MCF 10A (cell line): ENCODE measurements at regions of chrX and their contacts with region 1.

Region 1: GRCh38 chrX:88135735-88136134 is 611.3 kb upstream of the CPXCR1 start:
- DNase-seq: peak; percentile 13
- H3K4me3 Mint-ChIP-seq: no peak overlapping the region
- H3K27ac Mint-ChIP-seq: no peak overlapping the region
- H3K4me1 Mint-ChIP-seq: no peaks in the 10 kb centered on the region
- H3K27me3 Mint-ChIP-seq: peaks cover 15% of the 10 kb centered on the region
- CTCF ChIP-seq: peak; percentile 19

Region 2: DNA sequence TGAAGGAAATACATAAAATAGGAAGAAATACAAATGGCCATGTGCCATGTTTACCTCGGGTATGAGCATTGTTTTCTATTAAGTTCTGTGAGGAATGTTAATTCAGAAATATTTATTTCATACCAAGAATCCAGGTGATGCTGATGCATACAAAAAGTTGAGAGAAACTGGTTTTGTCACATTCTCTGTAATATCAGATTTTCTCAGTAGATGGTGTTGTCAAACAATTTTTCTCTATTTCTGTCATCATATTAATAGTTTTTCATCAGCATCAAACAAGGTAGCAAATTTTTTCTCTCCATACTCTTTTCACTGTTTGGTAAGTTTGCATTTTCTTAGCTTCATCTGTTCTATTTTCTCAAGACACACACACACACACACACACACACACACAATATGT is 438.3 kb before region 1 on chrX:
- CTCF ChIA-PET with region 1: no interaction called
- POLR2A ChIA-PET with region 1: no interaction called
- intact Hi-C with region 1: loop called (anchors 10 kb)
- DNase-seq: no peak
- H3K4me3 Mint-ChIP-seq: no peak overlapping the region
- H3K27ac Mint-ChIP-seq: no peak overlapping the region
- H3K4me1 Mint-ChIP-seq: no peaks in the 10 kb centered on the region
- H3K27me3 Mint-ChIP-seq: peaks cover 18% of the 10 kb centered on the region
- CTCF ChIP-seq: peak; percentile 13

Region 3: GRCh38 chrX:88425739-88426138 is 290.0 kb after region 1 on chrX:
- CTCF ChIA-PET with region 1: interaction called, 3 read pairs
- POLR2A ChIA-PET with region 1: no interaction called
- intact Hi-C with region 1: loop called (anchors 5 kb)
- DNase-seq: peak; percentile 31
- H3K4me3 Mint-ChIP-seq: peak overlapping the region; percentile 73
- H3K27ac Mint-ChIP-seq: peak overlapping the region; percentile 91
- H3K4me1 Mint-ChIP-seq: no peaks in the 10 kb centered on the region
- H3K27me3 Mint-ChIP-seq: no peaks in the 10 kb centered on the region
- CTCF ChIP-seq: peak; percentile 34